ENCODE measurements at regions of chr1 and their contacts with region 1.

Region 1: DNA sequence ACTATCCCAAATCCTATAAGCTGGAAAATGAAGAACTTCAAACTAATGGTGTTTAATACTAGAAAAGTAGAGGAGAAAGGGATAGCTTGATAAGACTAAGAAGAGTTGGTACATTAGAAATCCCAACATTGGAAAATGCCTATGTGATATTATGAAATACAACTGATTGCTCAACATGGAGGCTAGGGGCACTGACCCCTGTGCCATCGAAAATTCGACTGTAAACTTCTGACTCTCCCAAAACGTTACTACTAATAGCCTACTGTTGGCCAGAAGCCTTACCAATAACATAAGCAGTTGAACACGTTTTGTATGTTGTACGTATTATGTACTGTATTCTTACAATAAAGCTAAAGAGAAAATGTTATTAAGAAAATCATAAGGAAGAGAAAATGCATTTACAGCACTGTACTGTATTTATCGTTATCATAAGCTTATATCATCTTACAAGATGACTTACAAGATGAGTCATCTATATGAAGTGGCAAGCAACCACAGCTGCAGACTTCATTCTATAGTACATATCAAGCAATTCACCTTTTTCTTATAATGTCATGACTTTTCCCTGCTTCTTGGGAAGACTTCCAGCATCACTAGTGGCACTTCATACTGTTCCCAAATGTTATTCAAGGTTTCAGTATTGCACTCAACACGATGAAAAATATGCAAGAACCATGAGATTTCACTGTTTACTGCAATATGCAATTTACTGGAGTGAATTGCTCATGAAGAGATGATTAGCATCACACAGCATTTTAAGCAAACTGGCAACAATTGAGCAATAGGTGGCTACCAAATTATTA is 12.9 kb upstream of the CTSK start:
- DNase-seq: no peak
- ATAC-seq: no peak
- H3K4me3 ChIP-seq: no peak overlapping the region
- H3K4me3 Mint-ChIP-seq: no peak overlapping the region
- H3K27ac ChIP-seq: no peak overlapping the region
- H3K27ac Mint-ChIP-seq: peak overlapping the region; percentile 44
- H3K4me1 ChIP-seq: no peaks in the 10 kb centered on the region
- H3K4me1 Mint-ChIP-seq: no peaks in the 10 kb centered on the region
- H3K27me3 ChIP-seq: no peaks in the 10 kb centered on the region
- H3K27me3 Mint-ChIP-seq: no peaks in the 10 kb centered on the region
- CTCF ChIP-seq: no peak

Region 2: DNA sequence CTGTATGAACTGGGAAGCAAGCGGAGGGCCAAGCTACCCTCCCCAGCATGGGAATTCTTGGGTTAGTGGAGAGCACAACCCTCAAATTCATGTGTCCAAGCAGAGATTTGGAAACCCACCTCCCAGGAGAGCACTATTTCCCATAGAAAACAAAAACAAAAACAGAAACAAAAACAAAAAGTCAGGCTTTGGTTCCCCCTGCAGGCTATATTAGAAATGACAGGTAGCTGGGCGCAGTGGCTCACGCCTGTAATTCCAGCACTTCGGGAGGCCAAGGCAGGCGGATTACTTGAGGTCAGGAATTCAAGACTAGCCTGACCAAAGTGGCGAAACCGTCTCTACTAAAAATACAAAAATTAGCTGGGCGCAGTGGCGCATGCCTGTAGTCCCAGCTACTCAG is 175.0 kb after region 1 on chr1:
- CTCF ChIA-PET with region 1: no interaction called
- POLR2A ChIA-PET with region 1: no interaction called
- intact Hi-C with region 1: loop called in 1 of 2 experiments (anchors 2 kb)
- DNase-seq: peak in 6 of 14 experiments; percentile 15 to 65 (median 42)
- ATAC-seq: peak; percentile 60
- H3K4me3 ChIP-seq: no peak overlapping the region
- H3K4me3 Mint-ChIP-seq: no peak overlapping the region
- H3K27ac ChIP-seq: peak overlapping the region in 1 of 2 donors; percentile 26
- H3K27ac Mint-ChIP-seq: peak overlapping the region; percentile 65
- H3K4me1 ChIP-seq: peaks cover 27% of the 10 kb centered on the region
- H3K4me1 Mint-ChIP-seq: peaks cover 16% of the 10 kb centered on the region
- H3K27me3 ChIP-seq: no peaks in the 10 kb centered on the region
- H3K27me3 Mint-ChIP-seq: no peaks in the 10 kb centered on the region
- CTCF ChIP-seq: peak; percentile 96